Ovary (tissue), 10 donors: ENCODE measurements at regions of chr20 and their contacts with region 1.

Region 1: DNA sequence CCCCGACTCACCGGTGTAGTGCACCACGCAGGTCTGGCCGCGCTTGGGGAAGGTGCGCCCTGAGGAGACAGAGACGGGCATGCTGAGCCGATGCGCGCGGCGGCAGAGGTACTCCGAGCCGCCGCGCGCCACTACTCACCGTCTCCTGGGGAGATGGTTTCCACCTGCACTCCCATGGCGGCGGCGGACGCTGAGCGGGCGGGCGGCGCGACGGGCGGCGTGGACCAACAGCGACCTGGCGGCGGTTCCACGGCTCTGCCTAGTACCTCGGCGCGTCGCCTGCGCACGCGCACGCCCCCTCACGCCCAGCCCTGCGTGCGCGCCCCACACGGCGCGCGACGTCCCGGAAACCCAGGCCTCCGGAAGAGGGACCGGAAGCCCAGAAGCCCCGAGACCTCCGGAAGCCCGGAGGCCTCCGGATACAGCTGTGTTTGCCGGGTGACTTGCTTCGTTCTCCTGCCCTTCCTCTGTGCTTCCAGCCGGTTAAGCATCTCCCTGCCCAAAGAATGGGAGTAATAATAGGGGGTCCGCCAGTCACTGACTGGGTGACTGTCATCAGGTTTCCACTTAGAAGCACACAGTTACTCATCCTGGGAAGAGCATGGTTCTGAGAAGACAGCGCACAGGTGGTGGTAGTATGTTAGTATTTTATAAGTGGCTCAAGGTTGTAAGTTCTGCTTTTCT is at the start of gene FKBP1A:
- DNase-seq: peak; percentile 90 to 96 (median 90)
- H3K4me3 ChIP-seq: peak within 1 kb of the TSS; percentile 82
- H3K27ac ChIP-seq: peak within 1 kb of the TSS; percentile 73 to 74
- H3K4me1 ChIP-seq: peaks cover 32% of the 10 kb centered on the region
- H3K27me3 ChIP-seq: no peaks in the 10 kb centered on the region
- CTCF ChIP-seq: peak; percentile 9 to 52 (median 39)
- EP300 ChIP-seq: peak; percentile 33
- POLR2A ChIP-seq: peak; percentile 88
- total RNA-seq, gene FKBP1A: 64.7 to 258 (median 151) TPM

Region 2: GRCh38 chr20:324177-325044 is 1068.6 kb before region 1 on chr20:
- intact Hi-C with region 1: loop called in 1 of 4 experiments (anchors 10 kb)
- DNase-seq: peak; percentile 87 to 94 (median 92)
- H3K4me3 ChIP-seq: peak overlapping the region; percentile 69
- H3K27ac ChIP-seq: peak overlapping the region; percentile 23 to 97
- H3K4me1 ChIP-seq: peaks cover 5% of the 10 kb centered on the region
- H3K27me3 ChIP-seq: no peaks in the 10 kb centered on the region
- CTCF ChIP-seq: peak in 2 of 3 donors; percentile 20 to 31
- EP300 ChIP-seq: no peak
- POLR2A ChIP-seq: peak; percentile 57

Region 3: DNA sequence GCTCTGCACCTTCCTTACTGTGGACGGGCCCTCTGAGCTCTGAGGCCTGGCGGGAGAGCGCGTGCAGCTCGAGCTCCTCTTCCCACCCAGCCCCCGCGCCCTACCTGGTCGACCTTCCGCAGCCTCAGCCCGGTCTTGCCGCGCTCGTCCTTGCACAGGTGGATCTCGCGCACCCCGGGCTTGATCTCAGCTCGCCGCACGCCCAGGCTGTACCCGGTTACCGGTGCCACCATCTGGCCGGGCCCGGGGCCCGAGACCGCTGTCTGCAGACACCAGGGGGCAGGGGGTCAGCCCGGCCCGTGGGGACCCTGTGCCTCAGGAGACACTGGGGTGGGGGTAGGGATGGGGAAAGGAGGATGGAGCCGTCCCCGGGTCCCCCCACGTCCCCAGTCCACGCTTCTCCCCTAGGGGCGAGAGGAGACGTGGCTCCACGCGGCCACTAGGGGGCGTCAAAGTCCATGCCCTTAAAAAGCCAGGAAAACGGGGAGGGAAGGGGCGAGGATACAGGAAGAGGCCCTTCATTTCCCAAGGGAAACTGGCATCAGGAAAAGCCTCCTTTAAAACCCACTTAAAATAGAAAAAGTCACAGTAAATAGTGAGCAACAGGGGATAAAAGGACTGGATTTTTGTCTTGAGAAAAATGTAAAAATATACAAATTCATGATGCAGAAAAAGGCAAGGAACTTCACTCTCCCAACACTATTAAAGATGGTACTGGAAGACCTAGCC is 79.6 kb before region 1 on chr20:
- intact Hi-C with region 1: loop called in 1 of 4 experiments (anchors 5 kb)
- DNase-seq: peak; percentile 79 to 88 (median 85)
- H3K4me3 ChIP-seq: no peak overlapping the region
- H3K27ac ChIP-seq: no peak overlapping the region
- H3K4me1 ChIP-seq: peaks cover 2% of the 10 kb centered on the region
- H3K27me3 ChIP-seq: no peaks in the 10 kb centered on the region
- CTCF ChIP-seq: peak; percentile 82 to 97 (median 95)
- EP300 ChIP-seq: no peak
- POLR2A ChIP-seq: no peak

Region 4: DNA sequence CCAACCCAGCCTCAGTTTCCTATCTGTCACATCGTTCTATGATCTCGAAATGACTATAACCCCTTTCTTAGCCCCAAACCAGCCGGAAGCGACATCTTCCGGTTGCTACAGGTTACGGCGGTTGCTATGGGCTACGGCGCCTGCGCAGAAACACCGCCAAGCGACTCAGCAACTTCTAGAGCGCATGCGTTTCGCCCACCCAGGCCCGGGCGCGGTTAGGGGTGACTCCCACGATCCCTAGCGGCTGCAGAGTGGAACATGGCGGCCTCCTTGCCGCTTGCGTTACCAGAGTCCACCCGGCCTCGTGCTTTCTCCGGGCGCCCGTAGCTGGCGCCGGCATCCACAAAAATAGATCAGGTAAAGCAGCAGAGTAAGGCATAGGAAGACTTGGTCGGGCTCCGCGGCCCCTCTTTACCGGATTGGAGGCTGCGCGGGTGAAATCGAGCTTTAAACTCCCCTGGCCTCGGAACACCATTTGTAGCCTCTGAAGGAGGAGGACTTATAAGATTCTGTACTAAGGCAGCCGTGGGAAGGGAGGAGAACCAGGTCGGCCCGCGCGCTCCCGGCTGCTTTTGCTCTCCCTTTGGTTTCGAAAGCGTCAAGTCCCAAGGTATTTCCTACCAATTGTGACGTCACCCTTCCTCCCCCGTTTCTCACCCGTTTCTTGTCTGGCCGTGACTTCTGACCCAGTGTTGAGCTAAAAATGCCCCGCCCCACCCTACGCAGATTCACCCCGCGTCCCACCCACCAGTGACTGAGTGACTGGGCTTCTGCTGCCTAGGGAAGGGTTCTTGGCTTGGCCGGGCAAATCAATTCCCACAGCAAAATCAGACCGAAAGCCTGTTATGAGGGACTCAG is 67.6 kb before region 1 on chr20:
- intact Hi-C with region 1: loop called (anchors 2 to 10 kb)
- DNase-seq: peak; percentile 98 to 99 (median 99)
- H3K4me3 ChIP-seq: peak overlapping the region; percentile 76
- H3K27ac ChIP-seq: peak overlapping the region; percentile 92 to 97
- H3K4me1 ChIP-seq: peaks cover 26% of the 10 kb centered on the region
- H3K27me3 ChIP-seq: no peaks in the 10 kb centered on the region
- CTCF ChIP-seq: peak in 2 of 3 donors; percentile 44 to 72
- EP300 ChIP-seq: peak; percentile 27
- POLR2A ChIP-seq: peak; percentile 95

Region 5: DNA sequence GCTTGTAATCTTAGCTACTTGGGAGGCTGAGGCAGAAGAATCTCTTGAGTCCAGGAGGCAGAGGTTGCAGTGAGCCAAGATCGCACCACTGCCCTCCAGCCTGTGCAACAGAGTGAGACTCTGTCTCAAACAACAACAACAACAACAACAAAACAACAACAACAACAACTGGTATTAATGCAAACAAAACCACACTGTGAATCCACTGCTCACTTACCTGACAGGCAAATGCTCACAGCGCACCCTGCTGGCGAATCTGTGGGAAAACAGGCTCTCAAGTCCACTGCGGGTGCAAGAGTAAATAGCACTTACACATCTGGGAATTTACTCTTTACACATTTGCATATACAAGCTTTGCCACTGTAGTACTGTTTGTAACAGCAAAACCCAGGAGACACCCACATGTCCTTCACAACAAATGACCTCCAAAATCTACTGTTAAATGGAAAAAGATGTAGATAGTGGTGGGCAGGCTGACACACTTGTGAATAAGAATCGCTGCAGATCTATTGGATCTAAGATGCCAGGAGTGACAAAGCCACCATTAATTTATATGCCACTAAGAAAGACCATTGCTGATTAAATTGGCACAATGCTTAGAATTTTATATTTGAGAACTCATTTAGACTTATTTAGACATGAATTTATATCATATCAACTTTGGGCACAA is 44.4 kb after region 1 on chr20:
- intact Hi-C with region 1: no loop called
- DNase-seq: peak; percentile 57 to 73 (median 69)
- H3K4me3 ChIP-seq: no peak overlapping the region
- H3K27ac ChIP-seq: no peak overlapping the region
- H3K4me1 ChIP-seq: no peaks in the 10 kb centered on the region
- H3K27me3 ChIP-seq: no peaks in the 10 kb centered on the region
- CTCF ChIP-seq: peak; percentile 50 to 72 (median 57)
- EP300 ChIP-seq: no peak
- POLR2A ChIP-seq: no peak

Region 6: GRCh38 chr20:1466211-1467081 is 73.5 kb after region 1 on chr20 and contains the start of gene NSFL1C:
- intact Hi-C with region 1: loop called in 1 of 4 experiments (anchors 5 kb)
- DNase-seq: peak; percentile 93 to 97 (median 96)
- H3K4me3 ChIP-seq: peak within 1 kb of the TSS; percentile 86
- H3K27ac ChIP-seq: peak within 1 kb of the TSS; percentile 16 to 69
- H3K4me1 ChIP-seq: peaks cover 10% of the 10 kb centered on the region
- H3K27me3 ChIP-seq: no peaks in the 10 kb centered on the region
- CTCF ChIP-seq: peak; percentile 96 to 99 (median 98)
- EP300 ChIP-seq: no peak
- POLR2A ChIP-seq: peak; percentile 71
- total RNA-seq, gene NSFL1C: 23.4 to 79.6 (median 63.2) TPM